ENCODE measurements at regions of chr4 and their contacts with region 1.

Region 1: GRCh38 chr4:54228056-54228527 is 1.0 kb upstream of the PDGFRA start:
- DNase-seq: peak; percentile 56 to 88 (median 76)

Region 2: GRCh38 chr4:53695540-53696463 is 532.3 kb before region 1 on chr4:
- intact Hi-C with region 1: loop called (anchors 10 kb)
- DNase-seq: no peak

Measured in head of caudate nucleus (tissue), 42 donors.